ENCODE measurements at regions of chr17 and their contacts with region 1.

Region 1: DNA sequence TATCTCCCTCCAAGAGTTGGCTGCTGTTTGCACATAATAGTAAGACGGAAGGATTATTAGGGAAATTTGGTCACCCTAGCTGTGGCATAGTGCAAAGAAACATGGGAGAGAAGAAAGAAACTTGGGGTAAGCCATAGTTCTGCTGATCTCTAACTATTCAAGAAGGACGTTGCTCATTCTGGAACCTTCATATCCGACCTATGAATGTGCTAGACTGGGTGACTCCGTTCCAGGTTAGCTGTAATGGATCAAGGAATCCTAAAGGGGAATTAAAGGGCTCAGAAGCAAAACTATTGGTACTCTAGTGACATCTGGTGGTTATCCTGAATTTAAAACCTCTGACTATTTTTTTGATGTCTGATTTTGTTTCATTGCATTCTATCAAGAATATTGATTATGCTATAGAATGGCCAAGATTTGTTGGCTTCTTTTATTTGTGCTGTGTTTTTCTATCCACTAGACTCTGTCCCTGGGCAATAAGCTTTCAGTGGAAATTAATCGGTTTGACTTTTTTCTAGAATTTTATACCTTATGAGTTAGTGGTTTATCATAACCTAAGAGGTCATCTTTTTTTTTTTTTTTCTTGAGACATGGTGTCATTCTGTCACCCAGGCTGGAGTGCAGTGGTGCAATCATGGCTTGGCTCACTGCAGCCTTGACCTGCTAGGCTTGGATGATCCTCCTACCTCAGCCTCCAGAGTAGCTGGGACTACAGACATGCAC is 19.5 kb downstream of the PCTP start:
- DNase-seq: no peak
- H3K4me3 Mint-ChIP-seq: no peak overlapping the region
- H3K27ac Mint-ChIP-seq: no peak overlapping the region
- H3K4me1 Mint-ChIP-seq: no peaks in the 10 kb centered on the region
- H3K27me3 Mint-ChIP-seq: no peaks in the 10 kb centered on the region

Region 2: GRCh38 chr17:55683554-55684315 is 86.6 kb before region 1 on chr17:
- intact Hi-C with region 1: no loop called
- DNase-seq: no peak
- H3K4me3 Mint-ChIP-seq: no peak overlapping the region
- H3K27ac Mint-ChIP-seq: no peak overlapping the region
- H3K4me1 Mint-ChIP-seq: no peaks in the 10 kb centered on the region
- H3K27me3 Mint-ChIP-seq: peaks cover 8% of the 10 kb centered on the region

Region 3: DNA sequence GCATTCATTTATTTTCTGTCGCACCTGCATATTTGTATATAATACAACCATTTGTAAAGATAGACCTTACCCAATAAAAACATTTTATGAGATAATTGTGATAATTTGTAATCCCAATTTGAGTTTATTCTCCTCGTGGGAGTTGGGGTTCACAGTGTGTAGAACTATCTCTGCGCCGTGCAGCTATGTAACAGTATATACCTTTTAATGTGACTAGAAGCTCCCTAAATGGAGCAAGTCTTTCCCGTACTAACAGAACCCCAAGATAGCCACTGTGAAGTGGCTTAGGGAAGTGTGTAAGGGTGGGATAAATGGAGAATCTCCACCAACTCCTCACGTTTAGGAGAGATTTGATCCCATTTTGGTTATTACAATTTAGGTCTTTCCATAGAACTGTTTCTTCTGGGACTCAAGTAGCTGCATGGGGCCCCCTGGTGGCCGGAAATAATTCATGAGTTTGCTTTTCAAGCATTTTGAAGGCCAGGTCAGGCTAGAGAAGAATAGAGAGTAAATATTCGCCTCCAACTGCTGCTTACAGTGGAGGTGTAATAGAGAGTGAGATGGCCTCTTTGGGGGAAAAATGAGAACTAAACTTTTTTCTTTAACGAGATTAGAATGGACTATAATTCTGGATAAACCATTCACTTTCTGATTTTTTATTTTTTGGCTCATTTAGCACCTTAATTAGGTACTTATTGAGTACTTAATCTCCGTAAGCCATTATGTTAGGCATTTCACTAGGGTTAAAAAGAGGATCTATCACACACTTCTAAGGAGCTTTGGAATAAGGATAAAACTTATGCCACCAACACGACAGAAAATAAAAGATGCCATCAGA is 52.2 kb before region 1 on chr17:
- intact Hi-C with region 1: loop called (anchors 1 kb)
- DNase-seq: peak; percentile 31
- H3K4me3 Mint-ChIP-seq: no peak overlapping the region
- H3K27ac Mint-ChIP-seq: no peak overlapping the region
- H3K4me1 Mint-ChIP-seq: no peaks in the 10 kb centered on the region
- H3K27me3 Mint-ChIP-seq: peaks cover 16% of the 10 kb centered on the region

Region 4: GRCh38 chr17:55872374-55872773 is 102.1 kb after region 1 on chr17:
- intact Hi-C with region 1: no loop called
- DNase-seq: no peak
- H3K4me3 Mint-ChIP-seq: no peak overlapping the region
- H3K27ac Mint-ChIP-seq: no peak overlapping the region
- H3K4me1 Mint-ChIP-seq: no peaks in the 10 kb centered on the region
- H3K27me3 Mint-ChIP-seq: peaks cover 6% of the 10 kb centered on the region

Measured in activated T-helper 1 cell treated with anti-CD3 and anti-CD28 coated beads, Interleukin-12 subunit alpha, Interleukin-12 subunit beta, Interleukin-2, Interleukin-4 antibody, amounts not matched to agents 30 ng/mL and 10 ng/mL and 1 ng/mL, durations not matched to agents 14 hours and 24 hours and 36 hours (primary cell).